Activated naive CD8-positive, alpha-beta T cell treated with anti-CD3 and anti-CD28 coated beads, Interleukin-2, amount 10 ng/mL, durations not matched to agents 7 days and 5 days (primary cell): ENCODE measurements at regions of chr6 and their contacts with region 1.

Region 1: GRCh38 chr6:42890311-42891198 is 11.1 kb downstream of the RPL7L1 start:
- DNase-seq: peak; percentile 88
- ATAC-seq: peak; percentile 94
- H3K4me3 Mint-ChIP-seq: peak overlapping the region; percentile 89
- H3K27ac Mint-ChIP-seq: peak overlapping the region; percentile 97
- H3K4me1 Mint-ChIP-seq: peaks cover 26% of the 10 kb centered on the region
- H3K27me3 Mint-ChIP-seq: no peaks in the 10 kb centered on the region

Region 2: GRCh38 chr6:42771741-42772100 is 118.8 kb before region 1 on chr6:
- POLR2A ChIA-PET with region 1: interaction called, 15 read pairs
- DNase-seq: no peak
- ATAC-seq: no peak
- H3K4me3 Mint-ChIP-seq: peak overlapping the region; percentile 83
- H3K27ac Mint-ChIP-seq: peak overlapping the region; percentile 100
- H3K4me1 Mint-ChIP-seq: peaks cover 43% of the 10 kb centered on the region
- H3K27me3 Mint-ChIP-seq: peaks cover 2% of the 10 kb centered on the region

Region 3: DNA sequence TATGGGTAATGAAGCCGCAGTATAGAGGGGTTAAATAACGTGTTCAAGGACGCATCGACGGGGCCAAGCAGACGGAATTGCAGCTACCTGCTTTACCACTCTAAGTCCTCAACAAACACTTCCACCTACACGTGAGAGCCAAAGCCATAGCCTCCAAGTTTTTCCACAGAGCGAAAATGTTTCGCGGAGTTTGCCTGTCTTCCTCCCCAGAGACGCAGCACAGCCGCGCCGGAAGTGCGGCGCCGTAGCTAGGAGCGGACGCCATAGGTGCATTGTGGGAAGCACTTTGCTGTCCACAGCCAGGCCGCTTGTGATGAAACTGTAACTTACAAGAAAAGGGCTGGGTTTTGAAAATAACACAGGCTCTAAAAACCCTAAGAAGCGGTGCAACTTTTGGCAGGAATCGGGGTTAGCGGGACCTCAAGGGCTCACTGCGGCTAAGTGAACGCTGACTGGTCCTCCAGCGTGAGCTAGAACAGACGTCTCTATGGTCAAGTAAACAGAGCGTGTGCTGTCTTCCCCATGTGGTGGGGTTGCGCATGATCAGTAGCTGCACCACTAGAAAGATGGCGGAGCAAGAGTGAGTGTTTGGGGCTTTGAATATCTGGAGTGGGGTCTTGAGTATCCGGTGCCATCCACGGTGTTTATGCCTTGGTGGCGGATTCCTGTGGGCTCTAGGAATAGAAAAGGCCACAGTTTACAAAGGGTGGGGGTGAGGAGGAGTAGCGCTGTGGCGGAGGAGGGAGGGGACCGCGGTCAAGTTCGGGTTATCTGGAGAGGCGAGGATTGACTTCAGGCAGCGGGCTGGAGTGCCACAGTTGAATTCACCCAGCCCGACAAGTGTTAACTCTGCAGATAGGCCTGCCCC is 10.9 kb before region 1 on chr6 and contains the start of gene RPL7L1:
- POLR2A ChIA-PET with region 1: interaction called, 37 read pairs
- DNase-seq: peak; percentile 82
- ATAC-seq: peak; percentile 97
- H3K4me3 Mint-ChIP-seq: peak within 1 kb of the TSS; percentile 91
- H3K27ac Mint-ChIP-seq: peak within 1 kb of the TSS; percentile 96
- H3K4me1 Mint-ChIP-seq: peaks cover 12% of the 10 kb centered on the region
- H3K27me3 Mint-ChIP-seq: no peaks in the 10 kb centered on the region
- total RNA-seq, gene RPL7L1: 77.6 to 79.3 TPM

Region 4: GRCh38 chr6:42911171-42912021 is 20.8 kb after region 1 on chr6:
- POLR2A ChIA-PET with region 1: no interaction called
- DNase-seq: no peak
- ATAC-seq: no peak
- H3K4me3 Mint-ChIP-seq: peak overlapping the region; percentile 50
- H3K27ac Mint-ChIP-seq: no peak overlapping the region
- H3K4me1 Mint-ChIP-seq: peaks cover 3% of the 10 kb centered on the region
- H3K27me3 Mint-ChIP-seq: peaks cover 18% of the 10 kb centered on the region

Region 5: GRCh38 chr6:42984001-42984923 is 93.7 kb after region 1 on chr6 and contains the start of gene PPP2R5D:
- POLR2A ChIA-PET with region 1: interaction called, 13 read pairs
- DNase-seq: peak; percentile 91
- ATAC-seq: peak; percentile 94
- H3K4me3 Mint-ChIP-seq: peak within 1 kb of the TSS; percentile 99
- H3K27ac Mint-ChIP-seq: peak within 1 kb of the TSS; percentile 92
- H3K4me1 Mint-ChIP-seq: peaks cover 51% of the 10 kb centered on the region
- H3K27me3 Mint-ChIP-seq: no peaks in the 10 kb centered on the region
- total RNA-seq, gene PPP2R5D: 54.7 to 58.8 TPM